ENCODE measurements at regions of chr3 and their contacts with region 1.

Region 1: DNA sequence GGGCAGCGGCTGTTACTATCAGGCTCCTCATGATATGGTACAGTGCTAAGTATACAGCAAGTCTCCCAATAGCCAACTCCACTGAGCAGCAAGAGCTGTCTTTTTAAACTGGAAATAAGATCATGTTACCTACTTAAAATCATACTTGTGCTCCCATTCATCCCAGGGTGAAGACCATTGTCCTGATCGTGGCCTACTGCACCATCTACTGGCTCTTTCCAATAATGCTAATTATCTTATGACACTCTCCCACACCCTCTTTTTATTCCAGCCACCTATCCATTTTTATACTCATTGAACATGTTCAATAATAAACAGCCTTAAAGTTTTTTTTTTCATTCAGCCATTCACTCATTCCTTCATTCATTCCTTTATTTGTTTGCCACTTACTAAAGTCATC is 117.7 kb downstream of the GBE1 start:
- DNase-seq: no peak
- H3K4me3 Mint-ChIP-seq: no peak overlapping the region
- H3K27ac Mint-ChIP-seq: no peak overlapping the region
- H3K4me1 Mint-ChIP-seq: no peaks in the 10 kb centered on the region
- H3K27me3 Mint-ChIP-seq: no peaks in the 10 kb centered on the region

Region 2: GRCh38 chr3:81581966-81582599 is 61.6 kb before region 1 on chr3:
- intact Hi-C with region 1: loop called (anchors 5 kb)
- DNase-seq: no peak
- H3K4me3 Mint-ChIP-seq: no peak overlapping the region
- H3K27ac Mint-ChIP-seq: no peak overlapping the region
- H3K4me1 Mint-ChIP-seq: no peaks in the 10 kb centered on the region
- H3K27me3 Mint-ChIP-seq: no peaks in the 10 kb centered on the region

Region 3: DNA sequence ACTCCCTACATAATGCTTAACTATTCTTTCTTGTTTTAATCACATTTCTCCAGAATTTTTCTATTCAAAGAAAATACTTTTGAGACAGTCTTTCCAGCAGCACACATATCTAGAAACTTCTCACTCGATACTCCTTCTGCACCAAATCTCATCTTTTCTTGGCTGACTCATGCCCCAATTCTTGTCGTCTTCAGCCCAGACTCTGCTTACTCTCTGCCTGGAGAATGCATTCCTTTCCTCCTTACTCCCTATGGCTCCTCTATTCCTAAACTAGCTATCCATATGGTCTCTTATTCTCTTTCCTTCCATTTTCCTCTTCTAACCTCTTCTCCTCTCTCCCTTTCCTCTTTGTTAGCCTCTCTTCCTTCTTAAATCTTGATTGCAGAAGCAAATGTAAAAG is 40.9 kb before region 1 on chr3:
- intact Hi-C with region 1: no loop called
- DNase-seq: no peak
- H3K4me3 Mint-ChIP-seq: no peak overlapping the region
- H3K27ac Mint-ChIP-seq: no peak overlapping the region
- H3K4me1 Mint-ChIP-seq: no peaks in the 10 kb centered on the region
- H3K27me3 Mint-ChIP-seq: no peaks in the 10 kb centered on the region

Region 4: DNA sequence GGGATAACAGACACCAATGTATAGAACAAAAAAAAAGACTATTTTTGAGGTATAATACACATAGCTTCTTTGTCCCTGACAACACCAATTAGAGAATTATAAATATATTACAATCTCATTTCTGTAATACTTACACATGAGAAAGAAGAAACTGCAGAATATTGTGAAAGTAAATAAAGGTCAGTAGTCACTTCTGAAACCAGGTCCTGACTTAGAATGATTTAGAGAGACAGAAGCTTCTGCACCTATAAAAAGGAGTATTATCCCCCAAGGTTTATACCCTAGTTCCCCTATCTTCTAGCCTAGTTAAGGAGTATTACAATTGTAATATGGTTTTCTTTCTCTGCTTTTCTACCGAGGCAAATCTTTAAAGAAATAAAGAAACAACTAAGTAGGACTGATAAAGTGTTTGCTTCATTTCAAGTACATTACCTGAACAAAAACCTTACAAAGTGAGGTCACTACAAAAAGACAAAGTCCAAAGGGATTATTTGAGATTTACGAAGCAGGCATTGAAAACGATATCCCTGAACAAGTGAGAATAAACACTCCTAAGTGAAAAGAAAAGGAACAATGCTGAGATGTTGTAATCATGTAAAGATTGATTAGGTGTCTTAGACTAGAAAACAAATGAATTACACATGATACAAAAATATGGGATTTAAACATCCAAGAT is 14.7 kb after region 1 on chr3:
- intact Hi-C with region 1: no loop called
- DNase-seq: no peak
- H3K4me3 Mint-ChIP-seq: no peak overlapping the region
- H3K27ac Mint-ChIP-seq: no peak overlapping the region
- H3K4me1 Mint-ChIP-seq: no peaks in the 10 kb centered on the region
- H3K27me3 Mint-ChIP-seq: no peaks in the 10 kb centered on the region

Region 5: GRCh38 chr3:81692766-81693165 is 49.0 kb after region 1 on chr3:
- intact Hi-C with region 1: no loop called
- DNase-seq: no peak
- H3K4me3 Mint-ChIP-seq: no peak overlapping the region
- H3K27ac Mint-ChIP-seq: no peak overlapping the region
- H3K4me1 Mint-ChIP-seq: no peaks in the 10 kb centered on the region
- H3K27me3 Mint-ChIP-seq: no peaks in the 10 kb centered on the region

Measured in activated T-helper 1 cell treated with anti-CD3 and anti-CD28 coated beads, Interleukin-12 subunit alpha, Interleukin-12 subunit beta, Interleukin-2, Interleukin-4 antibody, amounts not matched to agents 30 ng/mL and 10 ng/mL and 1 ng/mL, durations not matched to agents 14 hours and 24 hours and 36 hours (primary cell).